Caco-2 (cell line): ENCODE measurements at regions of chr3 and their contacts with region 1.

Region 1: GRCh38 chr3:40191850-40192448 is 117.6 kb upstream of the EIF1B start:
- DNase-seq: peak; percentile 67 to 69
- H3K4me3 ChIP-seq: no peak overlapping the region
- H3K4me3 Mint-ChIP-seq: no peak overlapping the region
- H3K27ac Mint-ChIP-seq: no peak overlapping the region
- H3K4me1 ChIP-seq: no peaks in the 10 kb centered on the region
- H3K4me1 Mint-ChIP-seq: no peaks in the 10 kb centered on the region
- H3K27me3 ChIP-seq: no peaks in the 10 kb centered on the region
- H3K27me3 Mint-ChIP-seq: peaks cover 10% of the 10 kb centered on the region
- CTCF ChIP-seq: peak; percentile 89 to 92

Region 2: GRCh38 chr3:39587113-39587512 is 604.8 kb before region 1 on chr3:
- CTCF ChIA-PET with region 1: no interaction called
- POLR2A ChIA-PET with region 1: no interaction called
- intact Hi-C with region 1: no loop called
- DNase-seq: no peak
- H3K4me3 ChIP-seq: no peak overlapping the region
- H3K4me3 Mint-ChIP-seq: no peak overlapping the region
- H3K27ac Mint-ChIP-seq: no peak overlapping the region
- H3K4me1 ChIP-seq: no peaks in the 10 kb centered on the region
- H3K4me1 Mint-ChIP-seq: no peaks in the 10 kb centered on the region
- H3K27me3 ChIP-seq: no peaks in the 10 kb centered on the region
- H3K27me3 Mint-ChIP-seq: peaks cover 15% of the 10 kb centered on the region
- CTCF ChIP-seq: no peak

Region 3: GRCh38 chr3:40240921-40241320 is 49.0 kb after region 1 on chr3:
- CTCF ChIA-PET with region 1: interaction called, 3 read pairs
- POLR2A ChIA-PET with region 1: no interaction called
- intact Hi-C with region 1: loop called (anchors 5 kb)
- DNase-seq: no peak
- H3K4me3 ChIP-seq: no peak overlapping the region
- H3K4me3 Mint-ChIP-seq: no peak overlapping the region
- H3K27ac Mint-ChIP-seq: no peak overlapping the region
- H3K4me1 ChIP-seq: no peaks in the 10 kb centered on the region
- H3K4me1 Mint-ChIP-seq: peaks cover 2% of the 10 kb centered on the region
- H3K27me3 ChIP-seq: no peaks in the 10 kb centered on the region; the same call in 1 of the 2 replicates
- H3K27me3 Mint-ChIP-seq: peaks cover 2% of the 10 kb centered on the region
- CTCF ChIP-seq: no peak

Region 4: DNA sequence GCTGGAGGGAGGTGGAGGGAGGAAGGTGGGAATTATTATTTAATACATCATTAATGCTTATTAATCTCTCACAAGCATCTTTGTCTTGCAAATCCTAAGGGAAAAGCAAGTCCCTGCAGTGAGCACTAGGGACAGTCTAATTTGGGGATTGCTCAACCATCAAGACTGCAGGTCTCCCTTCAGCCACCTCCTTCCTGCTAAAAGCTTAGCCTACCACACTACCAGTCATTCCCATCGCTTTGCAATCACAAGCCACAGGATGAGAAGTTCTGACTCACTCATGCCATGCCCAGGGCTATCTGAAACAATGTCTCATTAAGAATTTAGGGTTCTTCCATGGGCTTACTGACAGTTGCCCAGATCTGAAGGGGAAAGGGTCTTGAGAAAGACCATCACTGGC is 66.6 kb after region 1 on chr3:
- CTCF ChIA-PET with region 1: no interaction called
- POLR2A ChIA-PET with region 1: no interaction called
- intact Hi-C with region 1: no loop called
- DNase-seq: no peak
- H3K4me3 ChIP-seq: no peak overlapping the region
- H3K4me3 Mint-ChIP-seq: no peak overlapping the region
- H3K27ac Mint-ChIP-seq: no peak overlapping the region
- H3K4me1 ChIP-seq: no peaks in the 10 kb centered on the region
- H3K4me1 Mint-ChIP-seq: peaks cover 13% of the 10 kb centered on the region
- H3K27me3 ChIP-seq: no peaks in the 10 kb centered on the region
- H3K27me3 Mint-ChIP-seq: no peaks in the 10 kb centered on the region
- CTCF ChIP-seq: no peak

Region 5: DNA sequence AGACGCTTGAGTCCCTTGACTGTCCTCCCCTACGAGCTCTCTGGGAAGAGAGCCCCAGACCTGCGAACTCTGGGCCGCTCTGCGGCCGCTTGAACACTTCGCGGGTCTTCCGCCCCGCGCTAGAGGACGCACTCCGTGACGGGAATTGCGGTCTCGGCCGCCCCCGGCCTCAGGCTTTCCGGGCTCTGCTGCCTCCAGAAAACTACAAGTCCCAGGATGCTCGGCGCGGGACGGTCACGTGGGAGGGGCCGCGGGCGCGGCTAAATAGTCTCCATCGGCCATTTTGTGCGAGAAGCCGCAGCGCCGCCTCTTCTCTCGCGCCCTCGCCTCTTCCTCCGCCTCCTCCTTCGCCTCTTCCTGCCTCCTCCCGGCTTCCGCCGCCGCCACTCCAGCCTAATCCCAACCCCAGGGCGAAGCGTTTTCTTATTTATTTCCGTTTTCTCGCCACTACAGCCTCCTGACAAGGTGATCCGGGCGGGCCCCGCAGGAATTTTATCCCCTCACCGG is 117.5 kb after region 1 on chr3 and contains the start of gene EIF1B:
- CTCF ChIA-PET with region 1: interaction called, 15 read pairs
- POLR2A ChIA-PET with region 1: interaction called, 3 read pairs
- intact Hi-C with region 1: no loop called
- DNase-seq: peak; percentile 96 to 98
- H3K4me3 ChIP-seq: peak within 1 kb of the TSS; percentile 80
- H3K4me3 Mint-ChIP-seq: peak within 1 kb of the TSS; percentile 98
- H3K27ac Mint-ChIP-seq: peak within 1 kb of the TSS; percentile 93
- H3K4me1 ChIP-seq: peaks cover 11% of the 10 kb centered on the region
- H3K4me1 Mint-ChIP-seq: peaks cover 9% of the 10 kb centered on the region
- H3K27me3 ChIP-seq: no peaks in the 10 kb centered on the region
- H3K27me3 Mint-ChIP-seq: no peaks in the 10 kb centered on the region
- CTCF ChIP-seq: peak; percentile 85 to 93
- total RNA-seq, gene EIF1B: 45.8 and 47.3 TPM in 2 replicates

Region 6: DNA sequence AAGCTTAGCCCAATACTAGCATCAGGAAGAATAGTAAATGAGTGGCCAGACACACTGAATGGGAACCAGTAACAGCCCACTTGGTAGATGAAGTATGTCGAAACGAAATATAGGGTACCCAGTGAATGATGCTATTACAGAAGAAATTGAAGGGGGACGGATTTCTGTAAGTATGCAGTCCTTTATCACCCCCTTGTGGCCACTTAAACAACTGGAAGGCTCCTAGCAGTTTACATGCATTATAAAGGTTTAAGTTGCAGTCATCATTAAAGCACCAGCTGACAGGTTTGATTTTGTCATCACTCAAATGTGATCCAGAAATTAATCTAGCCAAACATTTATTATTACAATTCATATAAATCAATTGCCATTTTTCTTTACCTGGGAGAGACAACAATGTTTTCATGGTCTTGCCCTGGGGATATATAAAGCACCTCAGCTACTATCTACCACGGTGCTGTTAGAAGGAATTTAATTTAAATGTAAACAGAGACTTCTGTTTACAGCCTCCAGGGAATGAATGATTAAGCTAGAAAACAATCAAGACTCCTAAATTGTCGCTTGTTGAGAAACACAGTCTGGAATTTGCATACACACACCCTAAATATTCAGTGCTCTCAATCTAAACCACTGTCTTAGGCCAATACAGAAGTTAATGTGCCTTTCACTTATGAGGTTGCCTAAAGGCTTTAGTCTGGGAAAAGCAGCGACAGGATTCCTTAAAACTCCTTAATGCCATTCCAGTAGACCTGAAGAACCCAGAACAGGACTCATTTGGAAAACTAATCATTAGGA is 125.3 kb after region 1 on chr3:
- CTCF ChIA-PET with region 1: interaction called, 14 read pairs
- POLR2A ChIA-PET with region 1: interaction called, 3 read pairs
- intact Hi-C with region 1: loop called (anchors 1 kb)
- DNase-seq: peak; percentile 40 to 57
- H3K4me3 ChIP-seq: no peak overlapping the region
- H3K4me3 Mint-ChIP-seq: no peak overlapping the region
- H3K27ac Mint-ChIP-seq: no peak overlapping the region
- H3K4me1 ChIP-seq: peaks cover 11% of the 10 kb centered on the region
- H3K4me1 Mint-ChIP-seq: peaks cover 9% of the 10 kb centered on the region
- H3K27me3 ChIP-seq: no peaks in the 10 kb centered on the region
- H3K27me3 Mint-ChIP-seq: peaks cover 2% of the 10 kb centered on the region
- CTCF ChIP-seq: peak; percentile 67 to 76

Region 7: GRCh38 chr3:40417845-40418543 is 226.0 kb after region 1 on chr3:
- CTCF ChIA-PET with region 1: no interaction called
- POLR2A ChIA-PET with region 1: no interaction called
- intact Hi-C with region 1: no loop called
- DNase-seq: peak; percentile 22 to 46
- H3K4me3 ChIP-seq: no peak overlapping the region
- H3K4me3 Mint-ChIP-seq: no peak overlapping the region
- H3K27ac Mint-ChIP-seq: no peak overlapping the region
- H3K4me1 ChIP-seq: peaks cover 10% of the 10 kb centered on the region
- H3K4me1 Mint-ChIP-seq: peaks cover 6% of the 10 kb centered on the region
- H3K27me3 ChIP-seq: no peaks in the 10 kb centered on the region
- H3K27me3 Mint-ChIP-seq: peaks cover 3% of the 10 kb centered on the region
- CTCF ChIP-seq: no peak